ENCODE measurements at regions of chr1 and their contacts with region 1.

Region 1: DNA sequence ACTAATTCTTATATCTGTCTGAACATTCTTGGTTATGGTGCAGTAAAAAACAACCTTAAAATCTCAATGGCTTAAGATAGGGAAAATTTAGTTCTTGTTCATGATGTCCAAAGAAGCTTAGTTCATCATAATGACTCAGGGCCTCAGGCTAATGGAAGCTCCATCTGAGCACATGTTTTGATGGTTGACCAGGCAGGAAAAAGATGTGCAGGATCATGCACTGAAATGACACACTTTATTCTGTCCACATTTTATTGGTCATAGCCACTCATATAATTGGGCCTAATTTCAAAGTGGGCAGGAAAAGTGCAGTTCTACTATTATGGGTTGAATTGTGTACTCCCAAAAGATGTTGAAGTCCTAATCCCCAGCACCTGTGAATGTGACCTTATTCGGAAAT is 198.2 kb downstream of the CENPF start:
- DNase-seq: no peak
- H3K4me3 ChIP-seq: no peak overlapping the region
- CTCF ChIP-seq: no peak
- POLR2A ChIP-seq: no peak

Region 2: GRCh38 chr1:213330281-213330680 is 1470.9 kb before region 1 on chr1:
- intact Hi-C with region 1: loop called (anchors 5 kb)
- DNase-seq: no peak
- H3K4me3 ChIP-seq: no peak overlapping the region
- CTCF ChIP-seq: no peak
- POLR2A ChIP-seq: no peak

Region 3: DNA sequence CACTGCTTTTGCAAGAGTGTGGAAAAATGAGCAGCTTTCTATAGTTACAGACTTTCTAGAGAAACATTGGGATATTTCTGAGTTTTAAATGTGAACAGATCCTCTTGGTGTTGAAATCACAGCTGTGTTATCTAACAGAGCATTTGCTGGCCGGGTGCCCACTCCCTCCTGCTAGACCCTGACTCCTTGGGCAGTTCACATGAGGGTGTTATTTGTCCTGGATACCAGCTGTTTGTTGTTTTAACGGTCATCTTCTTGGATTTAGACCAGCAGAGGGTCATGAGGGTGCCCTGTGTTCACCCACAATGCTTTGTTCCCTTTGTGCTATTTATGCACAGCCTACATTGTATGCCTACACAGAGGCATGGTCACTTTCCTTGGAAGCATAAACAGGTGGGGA is 131.1 kb before region 1 on chr1:
- intact Hi-C with region 1: no loop called
- DNase-seq: no peak
- H3K4me3 ChIP-seq: no peak overlapping the region
- CTCF ChIP-seq: no peak
- POLR2A ChIP-seq: no peak

Region 4: DNA sequence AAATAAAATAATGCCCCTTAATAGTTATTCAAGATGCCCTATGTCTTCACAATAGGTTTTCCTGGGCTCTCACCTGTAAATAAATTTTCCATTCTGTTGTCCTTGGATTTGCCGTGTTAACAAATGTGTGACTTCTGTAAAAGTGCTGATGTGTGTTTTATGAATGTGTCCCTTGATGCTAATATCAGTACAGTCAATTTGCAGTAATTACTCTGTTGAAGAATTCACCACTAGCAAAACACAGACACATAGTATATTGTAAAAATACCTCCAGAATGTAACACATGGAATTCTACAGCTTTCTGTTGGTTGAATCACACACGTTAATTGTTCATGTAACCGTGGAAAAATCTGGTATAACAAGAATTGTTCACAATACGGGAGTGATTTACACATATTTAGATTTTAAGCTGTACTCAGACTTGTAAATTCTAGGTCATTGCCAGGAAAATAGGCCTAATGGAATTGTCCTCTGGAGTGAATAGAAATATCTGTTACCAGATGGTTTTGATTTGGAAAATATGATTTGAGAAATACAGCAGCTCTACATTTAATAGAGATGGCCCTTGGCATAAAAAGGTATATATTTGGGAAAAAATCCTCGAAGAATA is 244.6 kb after region 1 on chr1:
- intact Hi-C with region 1: no loop called
- DNase-seq: no peak
- H3K4me3 ChIP-seq: no peak overlapping the region
- CTCF ChIP-seq: no peak
- POLR2A ChIP-seq: no peak

Region 5: GRCh38 chr1:215637041-215637573 is 835.9 kb after region 1 on chr1:
- intact Hi-C with region 1: no loop called
- DNase-seq: peak; percentile 44 to 85
- H3K4me3 ChIP-seq: no peak overlapping the region
- CTCF ChIP-seq: no peak
- POLR2A ChIP-seq: no peak

Measured in lower leg skin (tissue), 4 donors.